ENCODE measurements at regions of chrX and their contacts with region 1.

Region 1: DNA sequence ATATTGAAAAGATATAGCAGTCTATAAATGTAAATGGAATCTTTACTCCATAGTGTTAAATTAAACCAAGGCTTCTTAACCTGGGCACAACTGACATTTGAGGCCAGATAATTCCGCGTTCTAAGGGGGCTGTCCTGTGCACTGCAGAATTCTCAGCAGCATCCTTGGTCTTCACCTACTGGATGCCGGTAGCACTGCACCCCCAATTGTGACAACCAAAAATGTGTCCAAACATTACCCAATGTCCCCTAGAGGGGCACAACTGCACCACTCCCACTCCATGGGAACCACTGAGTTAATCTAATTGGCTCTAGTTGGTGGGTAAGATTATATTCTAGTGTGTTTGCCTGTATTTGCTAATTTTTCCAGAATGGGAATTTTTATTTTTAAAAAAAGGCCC is 16.6 kb downstream of the AP1S2 start:
- DNase-seq: no peak
- H3K4me3 ChIP-seq: no peak overlapping the region
- CTCF ChIP-seq: no peak

Region 2: DNA sequence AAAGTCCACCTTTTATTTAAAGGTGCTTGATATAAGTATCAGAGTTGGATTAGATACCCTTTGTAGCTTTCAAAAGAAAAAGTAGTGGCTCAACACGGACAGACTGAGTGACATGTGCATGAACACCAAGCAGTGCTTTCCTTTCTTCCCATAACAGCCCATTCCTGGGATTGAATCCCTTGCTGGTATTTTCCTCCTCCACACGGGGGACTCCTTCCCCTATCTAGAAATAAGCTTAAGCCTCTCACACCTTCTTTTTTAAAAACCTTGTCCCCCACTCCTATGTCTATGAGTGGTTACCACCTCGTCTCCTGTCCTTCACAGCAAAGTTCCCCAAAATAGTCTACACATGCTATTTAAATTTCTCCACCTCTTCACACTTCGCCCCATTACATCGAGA is 11.5 kb after region 1 on chrX:
- CTCF ChIA-PET with region 1: interaction called, 11 read pairs
- POLR2A ChIA-PET with region 1: no interaction called
- DNase-seq: no peak
- H3K4me3 ChIP-seq: no peak overlapping the region
- CTCF ChIP-seq: peak; percentile 15